Uterus (tissue), 4 donors: ENCODE measurements at regions of chr7 and their contacts with region 1.

Region 1: GRCh38 chr7:4681886-4682620 is at the start of gene FOXK1:
- DNase-seq: peak; percentile 62 to 78
- H3K4me3 ChIP-seq: peak within 1 kb of the TSS; percentile 77 to 86
- H3K27ac ChIP-seq: peak within 1 kb of the TSS; percentile 90 to 93
- H3K4me1 ChIP-seq: peaks cover 0 to 11% of the 10 kb centered on the region in 2 donors
- H3K27me3 ChIP-seq: no peaks in the 10 kb centered on the region
- CTCF ChIP-seq: peak in 3 of 4 experiments; percentile 29 to 58 (median 57)
- POLR2A ChIP-seq: peak; percentile 30 to 76
- total RNA-seq, gene FOXK1: 9.0 to 64.1 (median 21.5) TPM

Region 2: GRCh38 chr7:3787717-3788264 is 894.3 kb before region 1 on chr7:
- intact Hi-C with region 1: no loop called
- DNase-seq: no peak
- H3K4me3 ChIP-seq: no peak overlapping the region
- H3K27ac ChIP-seq: no peak overlapping the region
- H3K4me1 ChIP-seq: no peaks in the 10 kb centered on the region
- H3K27me3 ChIP-seq: no peaks in the 10 kb centered on the region
- CTCF ChIP-seq: no peak
- POLR2A ChIP-seq: no peak

Region 3: GRCh38 chr7:4641667-4642467 is 40.2 kb before region 1 on chr7:
- intact Hi-C with region 1: loop called (anchors 2 kb)
- DNase-seq: peak; percentile 96 to 98
- H3K4me3 ChIP-seq: peak overlapping the region; percentile 52 to 57
- H3K27ac ChIP-seq: peak overlapping the region; percentile 81 to 85
- H3K4me1 ChIP-seq: no peaks in the 10 kb centered on the region
- H3K27me3 ChIP-seq: no peaks in the 10 kb centered on the region
- CTCF ChIP-seq: peak; percentile 28 to 81 (median 76)
- POLR2A ChIP-seq: peak; percentile 51 to 86

Region 4: DNA sequence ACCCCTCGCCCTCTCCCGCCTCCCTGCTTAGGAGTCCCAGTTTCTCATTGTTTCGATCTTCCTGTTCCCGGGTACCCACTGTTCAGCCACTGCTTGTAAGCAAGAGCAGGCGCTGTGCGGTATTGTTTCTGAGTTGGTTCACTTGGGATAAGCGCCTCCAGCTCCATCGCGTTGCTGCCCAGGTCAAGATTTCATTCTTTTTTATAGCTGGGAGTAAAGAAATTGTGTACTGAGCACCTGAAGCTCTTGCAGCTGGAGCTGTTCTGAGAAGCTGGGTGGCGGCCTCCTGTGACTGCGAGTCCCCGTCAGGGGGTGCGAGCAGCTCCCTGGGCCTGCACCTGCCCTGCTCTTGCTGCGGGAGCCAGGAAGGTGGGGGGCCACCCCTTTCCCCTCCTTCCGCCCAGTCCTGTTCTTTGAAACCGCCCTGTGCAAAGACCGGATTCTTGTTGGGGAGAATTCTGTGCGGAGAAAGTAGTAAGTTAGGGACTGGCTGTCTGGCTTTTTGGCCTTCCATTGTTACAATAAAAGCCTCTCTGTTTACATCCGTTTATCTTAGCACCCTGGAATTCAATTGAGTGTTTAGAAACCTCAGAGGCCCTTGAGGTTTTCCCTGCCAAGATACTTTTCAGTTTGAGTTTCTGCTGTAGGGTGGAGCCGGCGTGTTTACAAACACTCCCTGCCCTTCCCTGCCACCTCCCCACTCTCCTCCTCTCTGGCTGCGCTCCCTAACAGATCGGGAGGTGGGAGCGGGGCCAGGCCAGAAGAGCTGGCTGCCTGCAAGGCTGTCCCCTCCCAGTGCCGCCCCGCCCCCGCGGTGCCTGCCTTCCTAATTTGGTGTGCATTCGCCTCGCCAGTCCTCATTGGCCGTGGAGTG is 62.6 kb after region 1 on chr7:
- intact Hi-C with region 1: loop called (anchors 5 kb)
- DNase-seq: peak; percentile 99
- H3K4me3 ChIP-seq: peak overlapping the region; percentile 21 to 31
- H3K27ac ChIP-seq: peak overlapping the region; percentile 91 to 98
- H3K4me1 ChIP-seq: peaks cover 12 to 17% of the 10 kb centered on the region in 2 donors
- H3K27me3 ChIP-seq: no peaks in the 10 kb centered on the region
- CTCF ChIP-seq: no peak
- POLR2A ChIP-seq: peak; percentile 24 to 55

Region 5: GRCh38 chr7:4775250-4775847 is 93.3 kb after region 1 on chr7 and contains the start of gene AP5Z1:
- intact Hi-C with region 1: no loop called
- DNase-seq: peak; percentile 94
- H3K4me3 ChIP-seq: peak within 1 kb of the TSS; percentile 85 to 90
- H3K27ac ChIP-seq: peak within 1 kb of the TSS; percentile 94 to 95
- H3K4me1 ChIP-seq: peaks cover 0 to 7% of the 10 kb centered on the region in 2 donors
- H3K27me3 ChIP-seq: no peaks in the 10 kb centered on the region
- CTCF ChIP-seq: peak in 2 of 4 experiments; percentile 3 to 15
- POLR2A ChIP-seq: peak; percentile 86 to 87
- total RNA-seq, gene AP5Z1: 12.9 to 40.2 (median 14.6) TPM

Region 6: DNA sequence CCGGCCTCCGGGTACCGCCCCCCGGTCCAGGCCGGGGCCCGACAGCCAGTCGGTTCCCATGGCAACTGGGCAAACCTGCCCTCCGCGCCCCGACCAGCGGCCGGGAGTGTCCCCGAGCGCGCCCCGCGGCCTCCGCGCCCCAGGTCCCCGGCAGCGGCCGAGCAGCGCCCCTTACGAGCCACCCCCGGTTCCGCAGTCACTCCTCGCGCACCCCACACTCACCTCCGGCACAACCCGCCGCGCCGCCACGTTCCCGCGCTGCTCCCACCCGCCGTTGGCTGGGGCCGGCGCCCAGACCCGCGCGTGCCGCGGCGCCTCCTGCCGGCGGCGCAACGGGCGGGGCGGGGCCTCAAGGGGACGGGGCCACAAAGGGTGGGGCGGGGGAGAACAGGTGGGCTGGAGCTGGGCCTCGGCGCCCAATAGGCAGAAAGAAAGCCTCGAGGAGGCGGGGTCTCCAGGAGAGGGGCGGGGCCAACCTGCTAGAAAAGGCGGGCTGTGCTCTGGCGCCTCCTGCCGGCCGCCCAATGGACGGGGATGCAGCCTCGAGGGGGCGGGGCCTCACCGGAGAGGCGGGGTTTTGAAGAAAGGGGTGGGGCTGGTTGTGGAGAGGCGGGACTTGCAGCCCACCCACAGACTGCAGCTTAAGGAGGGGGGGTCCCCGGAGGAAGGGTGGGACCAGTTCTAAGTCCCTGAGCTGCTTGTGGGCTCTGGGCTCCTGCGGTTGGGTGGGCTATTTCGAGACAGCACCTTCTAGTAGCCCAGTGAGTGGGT is 201.5 kb after region 1 on chr7 and contains the start of gene RADIL:
- intact Hi-C with region 1: loop called (anchors 5 kb)
- DNase-seq: peak; percentile 96 to 97
- H3K4me3 ChIP-seq: peak within 1 kb of the TSS; percentile 36 to 54
- H3K27ac ChIP-seq: peak within 1 kb of the TSS; percentile 86 to 87
- H3K4me1 ChIP-seq: no peaks in the 10 kb centered on the region
- H3K27me3 ChIP-seq: no peaks in the 10 kb centered on the region
- CTCF ChIP-seq: peak; percentile 82 to 91 (median 86)
- POLR2A ChIP-seq: peak in 1 of 2 donors; percentile 53
- total RNA-seq, gene RADIL: 1.0 to 10.1 (median 6.6) TPM